Panc1 (cell line): ENCODE measurements at regions of chr11 and their contacts with region 1.

Region 1: DNA sequence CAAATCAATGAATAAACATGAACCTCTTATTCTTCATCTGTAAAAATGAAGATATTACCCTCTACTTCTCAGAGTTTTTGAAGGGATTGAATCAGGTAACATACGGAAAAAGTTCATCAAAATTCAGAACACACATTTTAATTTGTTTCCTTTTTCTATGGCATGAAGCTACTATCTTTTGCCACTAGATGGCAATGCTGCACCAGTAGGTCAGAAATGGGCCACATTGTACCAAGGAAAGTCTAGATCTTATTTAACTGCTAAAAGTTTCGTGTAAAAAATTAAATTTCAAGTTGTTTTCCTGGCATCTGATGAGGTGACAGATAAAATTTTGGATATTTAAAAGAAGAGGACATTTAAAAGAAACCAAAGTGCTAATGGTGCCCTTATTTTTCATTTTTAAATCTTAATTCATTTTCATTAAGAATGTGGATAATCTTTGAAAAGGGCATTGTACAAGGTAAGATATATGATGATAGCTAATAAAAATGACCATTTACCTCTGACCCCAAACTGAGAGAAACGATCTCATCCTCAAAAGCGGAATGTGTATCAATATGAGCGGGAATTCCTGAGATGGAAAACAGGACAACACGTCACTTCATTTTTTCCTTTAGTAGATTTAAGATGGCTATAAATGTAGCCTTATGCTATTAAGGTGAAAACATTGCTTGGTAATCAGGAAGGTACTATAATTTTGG is 16.1 kb downstream of the ALKBH8 start:
- DNase-seq: no peak
- ATAC-seq: peak; percentile 64; the same call in 1 of the 2 replicates
- H3K4me3 ChIP-seq: no peak overlapping the region
- H3K27ac ChIP-seq: no peak overlapping the region
- H3K4me1 ChIP-seq: peaks cover 10% of the 10 kb centered on the region; the same call in 1 of the 2 replicates
- H3K27me3 ChIP-seq: no peaks in the 10 kb centered on the region
- CTCF ChIP-seq: peak; percentile 90

Region 2: DNA sequence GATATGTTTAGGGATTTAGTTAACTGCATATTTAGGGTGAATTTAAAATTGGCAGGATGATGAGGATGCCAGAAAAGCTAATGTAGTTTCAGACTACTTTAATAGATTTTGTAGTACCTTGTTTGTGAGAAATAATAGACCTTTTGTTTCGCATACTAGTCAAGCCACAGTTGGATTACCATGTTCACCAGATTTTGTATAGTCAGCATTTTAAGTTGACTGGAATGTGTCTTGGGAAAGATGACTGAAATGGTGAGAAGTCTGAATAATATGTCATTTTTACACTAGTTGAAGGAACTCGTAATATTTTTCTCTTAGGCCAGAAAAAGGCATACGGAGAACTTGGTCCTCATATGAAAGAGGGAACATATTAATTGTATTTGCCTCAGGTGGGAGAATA is 696.9 kb after region 1 on chr11:
- CTCF ChIA-PET with region 1: no interaction called
- POLR2A ChIA-PET with region 1: interaction called, 12 read pairs
- in situ Hi-C with region 1: no loop called
- intact Hi-C with region 1: no loop called
- DNase-seq: no peak
- ATAC-seq: no peak
- H3K4me3 ChIP-seq: no peak overlapping the region
- H3K27ac ChIP-seq: no peak overlapping the region
- H3K4me1 ChIP-seq: no peaks in the 10 kb centered on the region
- H3K27me3 ChIP-seq: no peaks in the 10 kb centered on the region
- CTCF ChIP-seq: no peak